K562 (cell line): ENCODE measurements at regions of chr11 and their contacts with region 1.

Region 1: GRCh38 chr11:27472398-27473016 is at the start of gene LGR4:
- DNase-seq: peak; percentile 93 to 96 (median 94)
- ATAC-seq: peak; percentile 97
- H3K4me3 ChIP-seq: peak within 1 kb of the TSS; percentile 76
- H3K27ac ChIP-seq: peak within 1 kb of the TSS; percentile 67
- H3K4me1 ChIP-seq: peaks cover 13 to 22% of the 10 kb centered on the region in 2 experiments; a peak in 4 of 5 replicates
- H3K27me3 ChIP-seq: no peaks in the 10 kb centered on the region
- CTCF ChIP-seq: no peak
- EP300 ChIP-seq: no peak
- POLR2A ChIP-seq: peak; percentile 52
- RAD21 ChIP-seq: no peak
- polyA plus RNA-seq, gene LGR4: 0.94 to 1.7 TPM

Region 2: GRCh38 chr11:27296497-27296896 is 176.0 kb before region 1 on chr11:
- CTCF ChIA-PET with region 1: no interaction called
- POLR2A ChIA-PET with region 1: interaction called, 4 read pairs
- in situ Hi-C with region 1: no loop called
- intact Hi-C with region 1: loop called (anchors 5 kb)
- DNase-seq: peak; percentile 22 to 67 (median 38)
- ATAC-seq: peak; percentile 95
- H3K4me3 ChIP-seq: no peak overlapping the region
- H3K27ac ChIP-seq: no peak overlapping the region
- H3K4me1 ChIP-seq: no peaks in the 10 kb centered on the region
- H3K27me3 ChIP-seq: no peaks in the 10 kb centered on the region
- CTCF ChIP-seq: peak; percentile 52 to 81 (median 64); a peak in 5 of 6 replicates
- EP300 ChIP-seq: no peak
- POLR2A ChIP-seq: no peak
- RAD21 ChIP-seq: peak; percentile 82 to 87

Region 3: DNA sequence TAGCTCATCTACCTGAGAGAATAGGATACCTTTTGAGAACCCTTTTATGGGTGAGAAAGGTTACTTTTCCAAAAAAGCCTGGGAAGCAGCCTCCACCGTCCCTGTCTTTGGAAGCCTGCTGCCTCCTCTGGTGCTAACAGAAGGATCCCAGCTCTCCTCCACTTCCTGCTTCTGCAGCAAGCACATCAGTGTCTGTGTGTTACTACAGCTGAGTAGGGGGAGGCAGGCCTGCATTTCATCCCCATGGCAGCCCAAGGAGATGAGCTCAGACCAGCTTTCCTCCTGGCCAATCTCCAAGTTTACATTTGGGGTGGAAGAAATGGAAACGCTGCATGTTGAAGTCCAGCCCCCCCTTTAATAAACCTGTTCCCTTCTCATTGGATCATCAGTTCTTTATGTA is 102.1 kb before region 1 on chr11:
- CTCF ChIA-PET with region 1: no interaction called
- POLR2A ChIA-PET with region 1: no interaction called
- in situ Hi-C with region 1: no loop called
- intact Hi-C with region 1: loop called (anchors 5 kb)
- DNase-seq: peak in 2 of 4 experiments; percentile 10 to 42
- ATAC-seq: peak; percentile 57; the same call in 2 of the 3 replicates
- H3K4me3 ChIP-seq: no peak overlapping the region
- H3K27ac ChIP-seq: no peak overlapping the region
- H3K4me1 ChIP-seq: peaks cover 14 to 34% of the 10 kb centered on the region in 2 experiments; a peak in 4 of 5 replicates
- H3K27me3 ChIP-seq: no peaks in the 10 kb centered on the region
- CTCF ChIP-seq: no peak
- EP300 ChIP-seq: no peak
- POLR2A ChIP-seq: no peak
- RAD21 ChIP-seq: no peak

Region 4: DNA sequence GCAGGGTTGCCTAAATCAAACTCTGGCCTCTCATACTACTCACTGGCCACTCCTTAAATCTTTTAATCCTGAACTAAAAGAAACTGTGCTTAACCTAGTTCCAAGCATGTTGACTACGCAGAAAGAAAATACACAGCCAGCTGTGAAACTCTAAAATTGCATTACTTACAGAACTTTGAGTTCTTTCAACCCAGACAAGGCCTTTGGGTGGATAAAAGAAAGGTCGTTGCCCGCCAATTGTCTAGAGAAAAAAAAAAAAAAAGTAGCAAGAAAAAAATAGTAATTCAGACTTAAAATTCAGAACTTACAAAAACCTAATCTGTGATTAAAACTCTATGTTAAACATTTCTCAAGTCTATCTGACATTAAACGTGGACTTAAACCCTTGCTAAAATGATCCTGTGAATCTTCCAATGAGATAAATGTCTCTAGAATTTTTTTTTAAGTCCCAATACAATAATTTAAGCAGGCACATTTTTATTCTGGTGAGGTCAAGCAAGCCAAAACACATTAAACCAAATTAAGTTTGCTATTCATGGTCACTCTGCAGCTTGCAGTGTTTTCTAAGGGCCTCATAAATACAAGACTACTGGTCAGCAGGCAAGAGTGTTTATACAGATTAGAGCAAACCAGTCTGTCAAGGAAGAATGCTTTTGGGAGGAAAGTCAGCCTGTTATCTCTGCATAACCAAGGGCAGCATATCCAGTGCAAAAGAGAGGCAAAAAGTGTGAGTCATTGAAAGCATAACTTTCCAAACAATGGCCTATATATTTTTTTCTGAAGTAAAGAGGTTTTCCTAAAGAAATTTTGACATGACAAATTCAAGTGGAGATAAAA is 80.0 kb before region 1 on chr11:
- CTCF ChIA-PET with region 1: no interaction called
- POLR2A ChIA-PET with region 1: no interaction called
- in situ Hi-C with region 1: no loop called
- intact Hi-C with region 1: loop called (anchors 2 kb)
- DNase-seq: peak; percentile 28 to 89 (median 54)
- ATAC-seq: peak; percentile 89
- H3K4me3 ChIP-seq: no peak overlapping the region
- H3K27ac ChIP-seq: peak overlapping the region; percentile 40; the same call in 1 of the 3 replicates
- H3K4me1 ChIP-seq: peaks cover 5 to 51% of the 10 kb centered on the region in 2 experiments
- H3K27me3 ChIP-seq: no peaks in the 10 kb centered on the region
- CTCF ChIP-seq: no peak
- EP300 ChIP-seq: peak; percentile 90
- POLR2A ChIP-seq: no peak
- RAD21 ChIP-seq: no peak

Region 5: GRCh38 chr11:27423125-27423524 is 49.4 kb before region 1 on chr11:
- CTCF ChIA-PET with region 1: no interaction called
- POLR2A ChIA-PET with region 1: interaction called, 4 read pairs
- in situ Hi-C with region 1: no loop called
- intact Hi-C with region 1: loop called (anchors 2 kb)
- DNase-seq: no peak
- ATAC-seq: no peak
- H3K4me3 ChIP-seq: no peak overlapping the region
- H3K27ac ChIP-seq: no peak overlapping the region
- H3K4me1 ChIP-seq: peaks cover 6 to 40% of the 10 kb centered on the region in 2 experiments; a peak in 4 of 5 replicates
- H3K27me3 ChIP-seq: no peaks in the 10 kb centered on the region
- CTCF ChIP-seq: no peak
- EP300 ChIP-seq: no peak
- POLR2A ChIP-seq: no peak
- RAD21 ChIP-seq: no peak

Region 6: DNA sequence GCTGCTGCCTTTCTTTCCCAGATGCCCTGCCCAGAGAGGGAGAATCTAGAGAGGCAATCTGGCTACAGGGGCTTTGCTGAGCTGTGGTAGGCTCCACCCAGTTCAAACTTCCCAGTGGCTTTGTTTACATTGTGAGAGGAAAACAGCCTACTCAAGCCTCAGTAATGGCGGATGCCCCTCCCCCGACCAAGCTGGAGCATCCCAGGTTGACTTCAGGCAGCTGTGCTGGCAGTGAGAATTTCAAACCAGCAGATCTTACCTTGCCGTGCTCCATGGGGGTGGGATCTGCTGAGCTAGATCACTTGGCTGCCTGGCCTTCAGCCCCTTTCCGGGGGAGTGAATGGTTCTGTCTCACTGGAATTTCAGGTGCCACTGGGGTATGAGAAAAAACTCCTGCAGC is 215.6 kb after region 1 on chr11:
- CTCF ChIA-PET with region 1: no interaction called
- POLR2A ChIA-PET with region 1: no interaction called
- in situ Hi-C with region 1: no loop called
- intact Hi-C with region 1: no loop called
- DNase-seq: no peak
- ATAC-seq: no peak
- H3K4me3 ChIP-seq: no peak overlapping the region
- H3K27ac ChIP-seq: no peak overlapping the region
- H3K4me1 ChIP-seq: no peaks in the 10 kb centered on the region
- H3K27me3 ChIP-seq: no peaks in the 10 kb centered on the region
- CTCF ChIP-seq: no peak
- EP300 ChIP-seq: no peak
- POLR2A ChIP-seq: no peak
- RAD21 ChIP-seq: no peak